Caco-2 (cell line): ENCODE measurements at regions of chr12 and their contacts with region 1.

Region 1: DNA sequence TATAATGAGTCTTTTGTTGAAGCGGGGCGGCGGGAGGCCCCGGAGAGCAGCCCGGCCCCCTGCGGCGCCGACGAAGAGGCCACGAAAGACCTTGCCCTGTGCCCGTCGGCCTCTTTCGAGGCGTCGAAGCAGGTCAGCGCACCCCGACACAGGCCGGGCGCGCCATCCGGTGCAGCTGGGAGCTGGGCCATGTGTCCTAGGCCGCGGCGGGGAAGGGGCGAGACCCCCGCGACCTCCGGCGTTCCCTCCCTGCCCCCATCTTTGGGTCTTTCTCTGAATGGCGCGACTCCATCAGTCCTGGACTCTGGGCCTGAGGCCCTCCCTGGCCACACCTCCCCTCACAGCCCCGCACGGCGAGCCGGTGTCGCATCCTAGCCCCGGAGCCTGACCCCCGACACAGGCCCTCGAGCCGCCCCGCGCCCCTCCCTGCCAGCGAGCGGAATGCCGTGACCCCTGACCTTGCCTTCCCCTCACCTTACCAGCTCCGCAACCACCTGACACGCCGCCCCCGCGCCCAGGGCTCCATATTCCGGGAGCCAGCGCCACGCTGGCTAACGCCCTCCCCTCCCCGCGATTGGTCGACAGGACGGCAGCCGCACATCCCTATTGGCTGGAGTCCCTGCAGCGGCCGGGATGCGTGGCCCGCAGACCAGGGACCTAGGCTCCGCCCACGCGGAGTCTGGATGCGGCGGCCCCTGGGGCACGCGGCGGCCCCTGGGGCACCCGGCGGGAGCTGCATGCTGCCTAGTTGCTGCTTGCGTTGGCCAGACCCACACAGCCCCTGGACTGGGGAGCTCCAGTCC is at the start of gene SLC11A2:
- DNase-seq: peak; percentile 98 to 99
- H3K4me3 ChIP-seq: peak within 1 kb of the TSS; percentile 86
- H3K4me3 Mint-ChIP-seq: peak within 1 kb of the TSS; percentile 82
- H3K27ac Mint-ChIP-seq: peak within 1 kb of the TSS; percentile 87
- H3K4me1 ChIP-seq: peaks cover 38% of the 10 kb centered on the region
- H3K4me1 Mint-ChIP-seq: peaks cover 37% of the 10 kb centered on the region
- H3K27me3 ChIP-seq: no peaks in the 10 kb centered on the region
- H3K27me3 Mint-ChIP-seq: no peaks in the 10 kb centered on the region
- CTCF ChIP-seq: peak in 1 of 2 experiments; percentile 43
- total RNA-seq, gene SLC11A2: 97.2 and 115 TPM in 2 replicates

Region 2: DNA sequence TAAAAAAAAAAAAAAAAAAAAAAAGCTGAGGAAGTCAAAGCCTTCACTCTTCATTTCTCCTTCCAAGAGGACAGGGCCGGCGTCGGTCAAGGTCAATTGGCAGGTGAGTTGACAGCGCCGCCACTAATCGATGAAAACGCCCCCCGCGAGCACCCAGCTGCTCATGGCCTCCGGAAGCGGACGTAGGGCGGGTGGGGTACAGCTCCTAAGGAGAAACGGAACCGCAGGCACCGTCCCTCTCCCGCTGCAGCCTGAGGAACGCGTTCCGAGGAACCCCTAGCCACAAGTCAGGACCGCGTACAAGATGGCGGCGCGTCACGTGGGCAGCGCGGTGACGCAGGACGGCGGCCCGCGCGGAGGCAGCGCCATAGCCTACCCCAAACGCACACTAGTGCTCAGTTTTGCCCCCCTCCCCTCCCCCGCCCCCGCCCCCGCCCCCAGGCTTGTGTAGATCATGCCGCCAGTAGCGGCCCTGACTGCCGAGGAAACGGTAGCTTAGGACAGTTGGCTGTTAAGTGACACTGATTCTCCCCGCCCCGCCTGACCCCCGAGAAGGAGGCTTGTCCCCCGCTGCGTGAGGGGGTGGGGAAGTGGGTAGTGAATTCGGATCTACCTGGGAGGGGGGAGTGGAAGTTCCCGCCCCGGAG is 262.3 kb before region 1 on chr12 and contains the start of gene ATF1:
- CTCF ChIA-PET with region 1: interaction called, 31 read pairs
- POLR2A ChIA-PET with region 1: interaction called, 11 read pairs
- intact Hi-C with region 1: loop called (anchors 1 kb)
- DNase-seq: peak; percentile 94 to 95
- H3K4me3 ChIP-seq: peak within 1 kb of the TSS; percentile 75
- H3K4me3 Mint-ChIP-seq: peak within 1 kb of the TSS; percentile 83
- H3K27ac Mint-ChIP-seq: peak within 1 kb of the TSS; percentile 95
- H3K4me1 ChIP-seq: peaks cover 22% of the 10 kb centered on the region
- H3K4me1 Mint-ChIP-seq: peaks cover 27% of the 10 kb centered on the region
- H3K27me3 ChIP-seq: no peaks in the 10 kb centered on the region
- H3K27me3 Mint-ChIP-seq: no peaks in the 10 kb centered on the region
- CTCF ChIP-seq: no peak
- total RNA-seq, gene ATF1: 47.0 and 54.4 TPM in 2 replicates

Region 3: DNA sequence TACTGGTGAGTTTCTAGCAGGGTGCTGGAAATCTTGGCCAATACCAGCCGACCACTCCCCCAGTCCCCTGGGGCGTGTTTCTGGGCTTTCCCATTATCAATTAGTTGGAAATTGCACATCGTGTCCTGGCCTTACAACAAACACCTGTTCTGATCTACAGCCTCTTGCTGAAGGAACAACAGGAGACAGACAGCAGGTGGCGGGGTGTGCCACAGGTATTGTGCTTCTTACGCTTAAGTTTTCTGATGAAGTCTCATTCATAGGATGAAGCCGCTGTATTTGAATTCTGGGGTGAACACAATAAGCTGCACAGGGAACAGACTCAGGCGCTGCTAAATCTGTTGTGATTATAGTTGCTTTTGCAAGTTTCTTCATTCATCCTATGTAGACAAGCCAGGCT is 73.0 kb before region 1 on chr12:
- CTCF ChIA-PET with region 1: no interaction called
- POLR2A ChIA-PET with region 1: interaction called, 3 read pairs
- intact Hi-C with region 1: loop called (anchors 2 kb)
- DNase-seq: peak in 1 of 2 experiments; percentile 51
- H3K4me3 ChIP-seq: no peak overlapping the region
- H3K4me3 Mint-ChIP-seq: no peak overlapping the region
- H3K27ac Mint-ChIP-seq: no peak overlapping the region
- H3K4me1 ChIP-seq: no peaks in the 10 kb centered on the region
- H3K4me1 Mint-ChIP-seq: no peaks in the 10 kb centered on the region
- H3K27me3 ChIP-seq: no peaks in the 10 kb centered on the region
- H3K27me3 Mint-ChIP-seq: no peaks in the 10 kb centered on the region
- CTCF ChIP-seq: peak; percentile 42 to 47

Region 4: DNA sequence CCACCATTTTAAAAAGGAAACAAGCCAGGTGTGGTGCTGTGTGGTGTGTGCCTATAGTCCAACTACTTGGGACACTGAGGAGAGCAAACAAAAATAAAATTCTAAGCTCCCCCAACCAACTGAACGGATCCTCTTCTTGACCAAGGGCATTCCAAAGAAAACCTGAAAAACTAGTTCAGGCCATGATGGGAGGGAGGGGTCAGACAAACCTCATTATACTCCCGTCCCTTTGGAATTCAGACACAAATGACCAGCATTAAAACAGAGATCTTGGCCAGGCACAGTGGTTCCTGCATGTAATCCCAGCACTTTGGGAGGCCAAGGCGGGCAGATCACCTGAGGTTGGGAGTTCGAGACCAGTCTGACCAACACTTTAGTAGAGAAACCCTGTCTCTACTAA is 20.3 kb before region 1 on chr12:
- CTCF ChIA-PET with region 1: interaction called, 31 read pairs
- POLR2A ChIA-PET with region 1: interaction called, 13 read pairs
- intact Hi-C with region 1: loop called (anchors 1 kb)
- DNase-seq: peak; percentile 81 to 87
- H3K4me3 ChIP-seq: no peak overlapping the region
- H3K4me3 Mint-ChIP-seq: peak overlapping the region; percentile 64
- H3K27ac Mint-ChIP-seq: peak overlapping the region; percentile 96
- H3K4me1 ChIP-seq: peaks cover 26% of the 10 kb centered on the region
- H3K4me1 Mint-ChIP-seq: peaks cover 23% of the 10 kb centered on the region
- H3K27me3 ChIP-seq: no peaks in the 10 kb centered on the region
- H3K27me3 Mint-ChIP-seq: no peaks in the 10 kb centered on the region
- CTCF ChIP-seq: no peak

Region 5: DNA sequence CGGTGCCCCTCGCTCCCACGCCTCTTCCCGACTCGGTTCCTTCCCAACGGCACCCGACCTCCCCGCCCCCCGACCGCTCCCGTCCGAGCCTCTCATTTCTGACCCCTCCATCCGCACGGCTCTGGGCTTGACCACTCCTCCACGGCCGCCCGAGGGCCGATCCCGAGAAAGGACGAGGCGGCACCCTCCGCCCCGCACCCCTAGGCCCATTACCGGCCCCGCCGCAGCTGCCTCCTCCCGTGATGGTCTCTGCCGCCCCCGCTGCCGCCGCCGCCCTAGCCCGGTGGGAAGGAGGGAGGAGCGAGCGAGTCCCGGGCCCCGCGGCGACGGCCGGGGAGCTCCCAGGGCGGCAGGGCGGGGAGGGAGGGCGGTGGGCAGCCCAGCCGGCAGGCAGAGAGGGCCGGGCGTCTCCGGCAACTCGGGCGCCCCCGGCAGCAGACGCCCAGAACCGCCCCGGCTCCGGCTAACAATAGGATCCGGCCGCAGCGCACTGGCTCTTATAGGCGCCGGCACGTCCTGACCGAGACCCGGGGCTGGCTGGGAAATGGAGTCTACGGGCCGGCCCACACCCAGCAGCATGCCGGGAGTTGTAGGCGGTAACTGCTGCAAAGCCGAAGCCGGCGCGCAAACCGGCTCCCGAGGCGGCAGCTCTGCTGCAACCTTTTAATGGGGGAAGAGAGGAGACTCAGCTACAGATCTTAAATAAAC is 57.2 kb after region 1 on chr12 and contains the start of gene CSRNP2:
- CTCF ChIA-PET with region 1: no interaction called
- POLR2A ChIA-PET with region 1: interaction called, 10 read pairs
- intact Hi-C with region 1: no loop called
- DNase-seq: peak; percentile 98 to 99
- H3K4me3 ChIP-seq: peak within 1 kb of the TSS; percentile 85
- H3K4me3 Mint-ChIP-seq: peak within 1 kb of the TSS; percentile 96
- H3K27ac Mint-ChIP-seq: peak within 1 kb of the TSS; percentile 94
- H3K4me1 ChIP-seq: peaks cover 10% of the 10 kb centered on the region; the same call in 1 of the 2 replicates
- H3K4me1 Mint-ChIP-seq: peaks cover 16% of the 10 kb centered on the region
- H3K27me3 ChIP-seq: no peaks in the 10 kb centered on the region
- H3K27me3 Mint-ChIP-seq: no peaks in the 10 kb centered on the region
- CTCF ChIP-seq: peak in 1 of 2 experiments; percentile 2
- total RNA-seq, gene CSRNP2: 39.7 and 44.0 TPM in 2 replicates

Region 6: GRCh38 chr12:51115533-51115932 is 89.5 kb after region 1 on chr12:
- CTCF ChIA-PET with region 1: no interaction called
- POLR2A ChIA-PET with region 1: no interaction called
- intact Hi-C with region 1: no loop called
- DNase-seq: no peak
- H3K4me3 ChIP-seq: no peak overlapping the region
- H3K4me3 Mint-ChIP-seq: no peak overlapping the region
- H3K27ac Mint-ChIP-seq: no peak overlapping the region
- H3K4me1 ChIP-seq: no peaks in the 10 kb centered on the region
- H3K4me1 Mint-ChIP-seq: no peaks in the 10 kb centered on the region
- H3K27me3 ChIP-seq: no peaks in the 10 kb centered on the region
- H3K27me3 Mint-ChIP-seq: no peaks in the 10 kb centered on the region
- CTCF ChIP-seq: no peak

Region 7: DNA sequence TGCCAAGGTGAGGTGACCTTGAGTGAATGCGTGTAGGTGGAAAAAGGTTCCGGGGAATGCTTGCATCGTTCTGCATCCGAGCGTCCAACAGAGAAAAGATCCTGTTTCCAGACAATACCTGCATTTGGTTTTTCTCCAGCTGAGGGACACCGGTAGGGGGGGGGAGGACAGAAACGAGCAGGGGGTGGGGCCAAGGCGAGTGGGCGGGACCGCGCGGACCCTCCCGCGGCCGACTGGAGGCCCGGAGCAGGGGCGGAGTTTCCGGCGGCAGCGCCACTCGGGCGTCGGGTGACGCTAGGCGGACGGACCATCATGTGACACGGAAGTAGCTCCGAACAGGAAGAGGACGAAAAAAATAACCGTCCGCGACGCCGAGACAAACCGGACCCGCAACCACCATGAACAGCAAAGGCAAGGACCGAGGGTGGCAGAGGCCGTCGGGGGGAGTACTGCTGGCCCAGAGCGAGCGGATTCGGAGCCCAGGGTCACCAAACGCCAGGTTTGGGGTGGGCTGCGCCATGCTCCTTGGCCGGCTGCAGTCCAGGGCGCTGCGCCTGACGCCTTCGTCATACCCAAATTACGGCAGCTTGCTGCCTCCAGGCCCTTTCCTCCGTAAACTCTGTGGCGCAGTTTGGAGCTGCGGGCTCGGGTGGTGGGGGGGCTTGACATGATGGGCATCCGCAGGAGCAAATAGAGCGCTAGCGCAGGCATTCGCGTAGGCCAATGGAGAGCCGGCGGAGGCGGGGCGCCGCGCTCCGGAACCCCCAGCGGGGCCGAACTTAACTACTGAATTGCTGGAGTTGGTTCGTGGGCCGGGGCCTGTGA is 212.7 kb after region 1 on chr12 and contains the start of gene DAZAP2:
- CTCF ChIA-PET with region 1: interaction called, 3 read pairs
- POLR2A ChIA-PET with region 1: interaction called, 11 read pairs
- intact Hi-C with region 1: loop called (anchors 2 kb)
- DNase-seq: peak; percentile 98
- H3K4me3 ChIP-seq: peak within 1 kb of the TSS; percentile 75
- H3K4me3 Mint-ChIP-seq: peak within 1 kb of the TSS; percentile 86
- H3K27ac Mint-ChIP-seq: peak within 1 kb of the TSS; percentile 100
- H3K4me1 ChIP-seq: peaks cover 17% of the 10 kb centered on the region
- H3K4me1 Mint-ChIP-seq: peaks cover 5% of the 10 kb centered on the region
- H3K27me3 ChIP-seq: no peaks in the 10 kb centered on the region
- H3K27me3 Mint-ChIP-seq: no peaks in the 10 kb centered on the region
- CTCF ChIP-seq: peak; percentile 16 to 59
- total RNA-seq, gene DAZAP2: 84.9 and 100 TPM in 2 replicates